Left ventricle myocardium inferior (tissue), 1 donor: ENCODE measurements at regions of chr1 and their contacts with region 1.

Region 1: GRCh38 chr1:99180343-99180808 is 83.9 kb upstream of the PLPPR4 start:
- DNase-seq: peak; percentile 41
- H3K4me3 ChIP-seq: no peak overlapping the region
- H3K27ac ChIP-seq: peak overlapping the region; percentile 47
- H3K4me1 ChIP-seq: peaks cover 8% of the 10 kb centered on the region
- H3K27me3 ChIP-seq: no peaks in the 10 kb centered on the region
- CTCF ChIP-seq: peak; percentile 84

Region 2: DNA sequence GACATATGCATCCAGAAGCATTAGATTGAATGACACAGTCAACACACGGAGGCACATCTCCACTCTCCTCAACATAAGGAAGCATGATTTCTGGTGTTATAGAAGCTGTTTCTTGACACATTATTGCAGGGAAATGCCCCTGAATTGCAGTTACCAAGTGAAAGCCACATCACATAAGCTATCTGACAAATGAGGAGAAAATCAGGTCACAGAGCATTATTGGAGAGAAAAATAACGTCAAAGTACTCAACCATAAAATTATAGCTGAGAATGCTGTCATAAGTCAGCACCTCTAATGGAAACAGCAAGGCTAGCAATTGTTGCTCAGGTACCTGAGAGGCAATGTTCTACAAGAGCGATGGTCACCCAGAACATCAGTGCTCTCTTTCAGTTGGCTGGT is 295.7 kb after region 1 on chr1:
- intact Hi-C with region 1: loop called (anchors 5 kb)
- DNase-seq: no peak
- H3K4me3 ChIP-seq: no peak overlapping the region
- H3K27ac ChIP-seq: no peak overlapping the region
- H3K4me1 ChIP-seq: no peaks in the 10 kb centered on the region
- H3K27me3 ChIP-seq: no peaks in the 10 kb centered on the region
- CTCF ChIP-seq: no peak

Region 3: GRCh38 chr1:99707535-99708142 is 527.3 kb after region 1 on chr1:
- intact Hi-C with region 1: loop called (anchors 5 kb)
- DNase-seq: peak; percentile 62
- H3K4me3 ChIP-seq: no peak overlapping the region
- H3K27ac ChIP-seq: peak overlapping the region; percentile 43
- H3K4me1 ChIP-seq: peaks cover 7% of the 10 kb centered on the region
- H3K27me3 ChIP-seq: no peaks in the 10 kb centered on the region
- CTCF ChIP-seq: peak; percentile 91